ENCODE measurements at regions of chr1 and their contacts with region 1.

Region 1: DNA sequence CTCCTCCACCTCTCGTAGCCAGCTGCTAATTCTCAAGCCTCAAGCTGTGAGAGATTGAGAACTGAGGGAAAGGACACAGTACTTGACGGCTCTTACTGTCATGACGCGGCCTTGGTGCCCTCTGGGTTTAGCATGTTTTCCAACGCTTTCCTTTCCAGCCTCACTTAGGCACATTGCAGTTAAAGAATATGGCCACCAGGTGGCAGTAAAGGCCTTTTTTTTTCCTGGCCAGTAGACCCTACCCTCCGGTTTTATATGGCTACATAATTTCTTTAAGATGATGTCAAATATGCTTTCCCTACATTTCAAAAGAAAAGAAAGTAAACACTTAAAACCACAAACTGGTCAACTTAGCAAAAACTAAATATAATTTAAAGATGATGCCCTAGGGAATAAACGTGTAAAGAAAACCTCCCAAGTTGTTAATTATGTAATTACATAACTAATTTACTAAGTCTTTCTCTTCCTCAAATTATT is 56.8 kb upstream of the PRDX6 start:
- DNase-seq: no peak
- H3K4me3 ChIP-seq: no peak overlapping the region
- H3K27me3 ChIP-seq: no peaks in the 10 kb centered on the region
- CTCF ChIP-seq: peak; percentile 72

Region 2: DNA sequence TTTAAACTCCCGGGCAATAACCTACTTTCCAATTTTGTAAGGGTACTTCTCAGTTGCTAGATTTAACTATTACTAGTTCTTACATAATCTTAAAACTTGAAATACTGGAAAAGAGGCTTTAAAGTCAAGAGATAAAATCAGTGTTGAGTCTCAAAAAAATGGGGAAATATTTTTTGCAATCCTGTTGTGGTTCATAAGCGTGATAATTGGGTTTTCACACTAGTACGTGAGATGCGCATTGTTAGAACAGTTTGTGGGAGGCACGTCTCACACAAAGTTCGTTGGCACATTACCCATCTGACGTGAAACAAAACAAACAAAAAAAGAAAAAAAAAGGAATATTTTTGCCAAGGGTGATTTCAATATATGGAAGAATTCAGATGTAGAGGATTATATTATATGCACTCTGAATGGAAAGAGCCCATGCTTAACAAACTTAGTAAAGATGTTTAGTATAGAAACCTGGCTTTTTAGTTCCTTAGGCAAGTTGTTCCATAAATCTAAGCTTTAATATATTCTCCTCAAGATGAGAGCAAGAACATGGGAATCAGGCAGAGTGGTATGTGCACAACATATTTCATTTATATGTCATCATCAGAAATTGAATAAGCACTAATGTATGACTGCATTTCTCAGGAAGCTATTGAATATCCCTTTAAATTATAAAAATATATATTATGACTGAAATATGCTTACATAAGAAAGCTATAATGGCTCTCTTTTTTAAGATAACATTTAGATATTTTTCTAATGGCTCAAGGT is 139.3 kb before region 1 on chr1:
- CTCF ChIA-PET with region 1: no interaction called
- POLR2A ChIA-PET with region 1: no interaction called
- DNase-seq: no peak
- H3K4me3 ChIP-seq: no peak overlapping the region
- H3K27me3 ChIP-seq: no peaks in the 10 kb centered on the region
- CTCF ChIP-seq: no peak

Region 3: GRCh38 chr1:173332026-173332425 is 88.3 kb before region 1 on chr1:
- CTCF ChIA-PET with region 1: no interaction called
- POLR2A ChIA-PET with region 1: interaction called, 13 read pairs
- DNase-seq: no peak
- H3K4me3 ChIP-seq: no peak overlapping the region
- H3K27me3 ChIP-seq: no peaks in the 10 kb centered on the region
- CTCF ChIP-seq: no peak

Region 4: DNA sequence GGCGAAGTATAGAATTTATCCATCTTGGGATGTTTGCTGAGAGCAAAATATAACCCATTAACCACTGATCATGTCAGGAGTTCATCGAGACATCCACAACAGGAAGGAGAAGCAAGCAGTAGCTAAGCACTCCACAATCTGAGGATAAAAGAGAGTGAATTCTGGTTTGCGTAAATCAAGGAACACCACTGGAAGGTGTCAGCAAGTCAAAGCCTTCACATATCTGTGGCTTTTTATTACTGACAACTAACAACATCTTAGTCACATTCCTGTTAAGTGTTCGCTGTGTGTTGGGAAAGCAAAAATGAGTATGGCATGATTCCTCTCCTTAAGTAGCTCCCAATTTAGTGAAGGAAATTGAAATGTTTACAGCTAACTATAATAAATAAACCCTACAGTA is 359.6 kb after region 1 on chr1:
- CTCF ChIA-PET with region 1: no interaction called
- POLR2A ChIA-PET with region 1: interaction called, 13 read pairs
- DNase-seq: no peak
- H3K4me3 ChIP-seq: no peak overlapping the region
- H3K27me3 ChIP-seq: no peaks in the 10 kb centered on the region
- CTCF ChIP-seq: no peak

Region 5: DNA sequence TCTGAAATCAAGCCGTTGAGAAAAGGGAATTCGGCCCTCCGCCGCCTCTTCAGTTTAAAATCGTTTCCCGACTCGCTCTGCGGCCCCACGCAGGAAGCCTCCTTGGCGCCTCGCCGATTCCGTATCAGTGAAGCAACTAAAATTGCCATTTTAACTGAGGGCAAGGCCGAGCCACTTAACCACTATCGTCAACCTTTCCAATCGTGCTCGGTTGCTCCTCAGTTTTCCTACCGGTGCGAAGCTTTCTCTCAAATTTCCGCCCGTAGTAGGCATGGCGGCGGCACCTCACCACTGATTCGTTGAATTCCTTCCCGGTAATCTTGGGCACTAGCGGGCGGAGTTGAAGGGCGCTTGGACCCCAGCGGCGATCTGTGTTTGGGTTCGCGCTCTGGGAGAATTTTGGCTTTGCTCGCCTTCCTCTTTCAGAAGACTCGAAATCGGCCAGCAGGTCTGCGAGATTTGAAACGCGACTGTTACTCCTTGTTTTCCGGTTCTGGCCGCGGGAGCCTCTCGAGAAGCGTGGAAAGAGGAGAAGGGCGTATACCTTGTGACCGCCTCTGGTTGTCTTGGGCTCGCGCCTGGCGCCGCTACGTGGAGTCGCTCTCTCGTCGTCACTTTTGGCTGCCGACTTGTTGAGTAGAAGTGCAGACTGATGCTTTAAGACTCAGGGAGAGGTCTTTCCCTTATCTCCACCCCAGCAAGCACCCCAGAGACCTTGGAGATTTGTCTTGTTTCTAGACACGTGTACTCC is 404.1 kb after region 1 on chr1 and contains the starts of genes CENPL and DARS2:
- CTCF ChIA-PET with region 1: interaction called, 10 read pairs
- POLR2A ChIA-PET with region 1: no interaction called
- DNase-seq: peak; percentile 93
- H3K4me3 ChIP-seq: peak within 1 kb of the TSS; percentile 82
- H3K27me3 ChIP-seq: no peaks in the 10 kb centered on the region
- CTCF ChIP-seq: no peak
- polyA plus RNA-seq, gene CENPL: 8.3 and 13.2 TPM in 2 replicates
- polyA plus RNA-seq, gene DARS2: 15.8 and 24.3 TPM in 2 replicates